Mammary epithelial cell (primary cell): ENCODE measurements at regions of chr20 and their contacts with region 1.

Region 1: DNA sequence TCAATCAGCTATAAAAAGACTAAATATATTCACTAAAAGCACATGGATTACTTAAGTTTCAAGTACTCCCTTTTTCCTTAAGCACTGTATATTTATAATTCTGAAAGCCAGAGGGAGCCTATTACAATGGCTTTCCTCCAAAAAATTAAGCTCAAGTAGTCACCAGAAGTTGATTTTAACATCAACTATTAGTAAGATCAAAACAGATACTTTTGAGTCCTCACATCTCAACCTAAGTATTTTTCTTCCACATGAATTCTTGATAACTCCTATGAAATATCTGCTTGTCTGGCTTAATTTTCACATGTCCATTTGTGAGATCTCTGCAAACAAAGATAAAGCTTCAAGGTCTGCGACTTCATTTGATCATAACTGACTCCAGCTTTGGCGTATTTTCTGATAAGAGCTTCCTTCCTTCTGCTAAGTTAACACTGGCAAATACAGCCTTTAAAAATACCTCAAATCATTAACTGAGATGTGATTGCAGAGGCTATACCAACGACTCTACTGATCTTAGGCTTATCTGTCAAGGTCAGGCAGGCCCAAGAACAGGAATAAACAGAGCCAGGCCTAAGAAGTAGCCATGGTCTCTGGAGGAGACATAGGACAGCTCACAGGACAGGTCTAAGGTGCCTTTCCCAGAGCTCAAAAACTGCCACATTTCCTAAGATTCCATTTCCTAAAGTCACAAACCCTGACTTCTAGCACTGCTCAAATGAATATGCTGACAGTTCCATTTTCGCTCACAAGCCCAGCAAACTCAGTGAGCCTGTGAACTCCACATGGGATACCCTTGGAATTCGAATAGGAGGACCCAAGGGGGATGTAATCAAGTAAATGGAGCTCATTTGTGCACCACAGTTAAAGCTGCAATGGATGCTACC is 10.0 kb downstream of the SNX5 start:
- DNase-seq: no peak
- H3K4me3 ChIP-seq: no peak overlapping the region
- H3K27ac ChIP-seq: no peak overlapping the region
- H3K4me1 ChIP-seq: peaks cover 37% of the 10 kb centered on the region
- H3K27me3 ChIP-seq: no peaks in the 10 kb centered on the region
- CTCF ChIP-seq: no peak

Region 2: DNA sequence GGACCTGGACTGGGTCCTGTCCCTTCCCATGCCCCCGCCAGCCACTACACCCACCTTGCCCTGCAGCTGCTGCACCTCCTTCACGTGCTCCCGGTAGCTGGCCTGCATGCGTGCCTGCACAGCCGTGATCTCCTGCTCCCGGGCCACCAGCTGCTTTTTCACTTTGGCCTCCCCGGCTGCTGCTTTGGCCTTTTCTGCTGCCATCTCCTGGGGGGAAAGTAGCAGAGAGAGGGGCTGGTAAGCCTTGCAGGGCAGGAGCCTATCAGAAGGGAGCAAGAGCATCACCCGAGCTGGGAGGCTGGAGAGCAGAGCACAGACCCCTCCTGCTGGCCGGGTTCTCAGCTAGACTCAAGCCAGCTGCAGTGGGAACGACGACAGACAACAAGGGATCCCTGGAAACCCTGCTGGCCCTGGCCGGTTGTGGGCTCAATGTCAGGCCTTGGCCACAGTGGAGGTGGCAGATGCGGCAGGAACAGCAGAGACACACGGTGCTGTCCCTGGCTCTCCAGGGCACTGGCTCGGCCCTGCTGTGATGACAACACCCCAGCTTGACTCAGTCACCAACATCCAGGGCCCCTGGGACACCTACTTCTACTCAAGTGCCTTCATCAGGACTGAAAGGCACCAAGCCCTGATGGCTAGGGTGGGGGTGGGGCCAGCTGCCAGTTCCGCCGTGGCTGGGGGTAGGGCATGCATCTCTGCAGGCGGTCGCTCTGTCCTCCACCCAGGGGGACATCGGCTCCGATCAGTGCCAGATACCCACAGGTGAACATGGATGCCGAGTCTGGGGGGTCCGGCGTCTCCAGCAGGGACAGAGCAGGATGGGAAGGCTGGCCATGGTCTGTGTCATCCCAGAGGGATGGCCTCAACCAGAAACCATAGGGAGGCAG is 321.8 kb before region 1 on chr20:
- CTCF ChIA-PET with region 1: no interaction called
- dilution Hi-C with region 1: loop called (anchors 5 kb)
- in situ Hi-C with region 1: no loop called
- intact Hi-C with region 1: no loop called
- DNase-seq: no peak
- H3K4me3 ChIP-seq: no peak overlapping the region
- H3K27ac ChIP-seq: no peak overlapping the region
- H3K4me1 ChIP-seq: no peaks in the 10 kb centered on the region
- H3K27me3 ChIP-seq: no peaks in the 10 kb centered on the region
- CTCF ChIP-seq: no peak

Region 3: GRCh38 chr20:17699931-17700657 is 258.5 kb before region 1 on chr20 and contains the start of gene BANF2:
- CTCF ChIA-PET with region 1: no interaction called
- dilution Hi-C with region 1: no loop called
- in situ Hi-C with region 1: no loop called
- intact Hi-C with region 1: no loop called
- DNase-seq: no peak
- H3K4me3 ChIP-seq: no peak within 1 kb of the TSS
- H3K27ac ChIP-seq: no peak within 1 kb of the TSS
- H3K4me1 ChIP-seq: no peaks in the 10 kb centered on the region
- H3K27me3 ChIP-seq: no peaks in the 10 kb centered on the region
- CTCF ChIP-seq: no peak
- total RNA-seq, gene BANF2: not detected

Region 4: GRCh38 chr20:17885544-17885943 is 73.1 kb before region 1 on chr20:
- CTCF ChIA-PET with region 1: no interaction called
- dilution Hi-C with region 1: no loop called
- in situ Hi-C with region 1: no loop called
- intact Hi-C with region 1: no loop called
- DNase-seq: no peak
- H3K4me3 ChIP-seq: no peak overlapping the region
- H3K27ac ChIP-seq: no peak overlapping the region
- H3K4me1 ChIP-seq: peaks cover 31% of the 10 kb centered on the region
- H3K27me3 ChIP-seq: no peaks in the 10 kb centered on the region
- CTCF ChIP-seq: no peak

Region 5: GRCh38 chr20:17904027-17904426 is 54.6 kb before region 1 on chr20:
- CTCF ChIA-PET with region 1: no interaction called
- dilution Hi-C with region 1: loop called (anchors 5 kb)
- in situ Hi-C with region 1: no loop called
- intact Hi-C with region 1: no loop called
- DNase-seq: no peak
- H3K4me3 ChIP-seq: no peak overlapping the region
- H3K27ac ChIP-seq: no peak overlapping the region
- H3K4me1 ChIP-seq: no peaks in the 10 kb centered on the region
- H3K27me3 ChIP-seq: no peaks in the 10 kb centered on the region
- CTCF ChIP-seq: no peak

Region 6: DNA sequence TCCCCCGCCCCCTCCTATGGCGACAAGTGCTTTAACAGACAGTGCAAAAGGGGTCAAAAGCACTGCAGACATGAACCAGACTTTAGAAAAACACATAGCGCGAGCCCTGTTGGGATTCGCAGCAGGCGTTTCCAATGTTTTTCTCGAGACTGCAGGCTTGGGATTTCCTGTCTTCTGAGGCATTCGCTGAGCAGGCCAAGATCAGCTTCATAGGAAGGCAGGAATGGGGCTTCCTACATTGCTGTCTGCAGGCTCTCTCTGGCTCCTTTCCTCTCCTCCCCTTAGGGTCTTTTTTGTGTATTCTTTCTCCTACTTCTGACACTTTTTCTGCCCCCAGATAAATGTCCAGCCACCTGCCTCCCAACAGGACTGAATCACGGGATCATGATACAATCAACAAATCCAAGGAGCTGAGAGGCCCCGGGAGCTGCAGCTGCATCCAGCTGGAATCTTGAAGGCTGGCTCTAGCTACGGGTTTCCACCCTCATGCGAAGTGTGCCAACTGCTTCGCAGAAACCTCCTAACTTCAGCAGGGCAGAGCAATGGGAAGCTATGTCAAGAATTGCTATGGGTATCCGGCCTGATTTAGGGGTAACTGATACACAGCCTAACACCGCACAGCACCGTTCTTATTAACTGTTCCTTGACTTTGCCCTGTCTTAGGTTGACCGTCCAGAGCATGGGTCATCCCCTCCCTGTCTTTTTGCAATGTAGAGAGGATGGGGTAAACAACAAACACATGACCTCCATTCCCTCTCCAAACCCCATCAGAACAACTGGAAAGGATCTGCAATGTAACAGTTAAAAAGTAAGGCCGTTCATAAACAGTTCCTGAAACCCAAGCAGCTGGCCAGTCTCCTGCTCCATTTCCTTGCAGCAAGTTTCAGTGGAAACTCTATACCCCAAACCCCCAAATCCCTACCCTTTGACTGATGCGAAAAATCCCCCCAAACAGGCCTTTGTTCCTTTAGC is 21.6 kb before region 1 on chr20:
- CTCF ChIA-PET with region 1: no interaction called
- dilution Hi-C with region 1: no loop called
- in situ Hi-C with region 1: no loop called
- intact Hi-C with region 1: no loop called
- DNase-seq: no peak
- H3K4me3 ChIP-seq: no peak overlapping the region
- H3K27ac ChIP-seq: no peak overlapping the region
- H3K4me1 ChIP-seq: no peaks in the 10 kb centered on the region
- H3K27me3 ChIP-seq: no peaks in the 10 kb centered on the region
- CTCF ChIP-seq: no peak